ENCODE measurements at regions of chr1 and their contacts with region 1.

Region 1: GRCh38 chr1:113978863-113979702 is at the start of gene OLFML3:
- DNase-seq: peak; percentile 73 to 91 (median 76)
- ATAC-seq: peak; percentile 90
- H3K4me3 ChIP-seq: no peak within 1 kb of the TSS
- H3K27ac ChIP-seq: no peak within 1 kb of the TSS
- H3K4me1 ChIP-seq: peaks cover 5 to 8% of the 10 kb centered on the region in 2 experiments; a peak in 2 of 5 replicates
- H3K27me3 ChIP-seq: peaks cover 19 to 42% of the 10 kb centered on the region in 2 experiments; a peak in 4 of 5 replicates
- CTCF ChIP-seq: peak; percentile 78 to 89 (median 79)
- EP300 ChIP-seq: no peak
- POLR2A ChIP-seq: no peak
- RAD21 ChIP-seq: peak; percentile 84 to 92
- polyA plus RNA-seq, gene OLFML3: not detected

Region 2: GRCh38 chr1:113684153-113684541 is 294.9 kb before region 1 on chr1:
- CTCF ChIA-PET with region 1: no interaction called
- POLR2A ChIA-PET with region 1: no interaction called
- in situ Hi-C with region 1: no loop called
- intact Hi-C with region 1: loop called (anchors 10 kb)
- DNase-seq: peak in 2 of 4 experiments; percentile 34 to 53
- ATAC-seq: peak; percentile 88
- H3K4me3 ChIP-seq: no peak overlapping the region
- H3K27ac ChIP-seq: no peak overlapping the region
- H3K4me1 ChIP-seq: peaks cover 0 to 4% of the 10 kb centered on the region in 2 experiments; a peak in 2 of 5 replicates
- H3K27me3 ChIP-seq: no peaks in the 10 kb centered on the region
- CTCF ChIP-seq: no peak
- EP300 ChIP-seq: no peak
- POLR2A ChIP-seq: no peak
- RAD21 ChIP-seq: no peak

Region 3: DNA sequence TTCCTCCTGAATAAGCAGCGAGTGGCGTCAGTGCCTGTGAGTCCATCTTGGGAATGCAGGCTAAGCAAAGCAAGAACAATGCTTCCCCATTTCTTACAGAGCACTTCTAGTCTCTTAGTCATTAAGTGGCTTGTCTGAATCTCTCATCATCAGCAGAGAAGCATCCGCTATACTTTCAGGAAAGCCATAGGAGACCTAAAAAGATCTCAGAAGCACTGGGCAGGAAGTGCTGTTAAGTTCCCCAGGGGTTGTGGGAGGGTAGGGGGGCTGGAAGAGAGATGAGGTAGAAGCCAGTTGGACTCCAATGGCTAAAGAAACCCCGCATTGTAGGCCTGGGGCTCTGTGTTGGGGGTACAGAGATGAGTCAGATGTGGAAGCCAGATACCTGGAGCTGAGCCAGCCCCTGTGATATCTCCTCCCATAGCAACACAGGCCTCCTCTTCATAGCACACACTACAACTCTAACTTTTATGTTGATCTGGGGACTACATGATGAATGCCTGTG is 129.7 kb after region 1 on chr1:
- CTCF ChIA-PET with region 1: no interaction called
- POLR2A ChIA-PET with region 1: no interaction called
- in situ Hi-C with region 1: no loop called
- intact Hi-C with region 1: loop called (anchors 10 kb)
- DNase-seq: no peak
- ATAC-seq: no peak
- H3K4me3 ChIP-seq: no peak overlapping the region
- H3K27ac ChIP-seq: no peak overlapping the region
- H3K4me1 ChIP-seq: peaks cover 0 to 3% of the 10 kb centered on the region in 2 experiments; a peak in 1 of 5 replicates
- H3K27me3 ChIP-seq: peaks cover 28 to 71% of the 10 kb centered on the region in 2 experiments
- CTCF ChIP-seq: no peak
- EP300 ChIP-seq: no peak
- POLR2A ChIP-seq: no peak
- RAD21 ChIP-seq: no peak

Region 4: GRCh38 chr1:114274621-114275317 is 295.7 kb after region 1 on chr1:
- CTCF ChIA-PET with region 1: no interaction called
- POLR2A ChIA-PET with region 1: interaction called, 3 read pairs
- in situ Hi-C with region 1: loop called (anchors 10 kb)
- intact Hi-C with region 1: no loop called
- DNase-seq: no peak
- ATAC-seq: no peak
- H3K4me3 ChIP-seq: no peak overlapping the region
- H3K27ac ChIP-seq: no peak overlapping the region
- H3K4me1 ChIP-seq: no peaks in the 10 kb centered on the region
- H3K27me3 ChIP-seq: peaks cover 4 to 19% of the 10 kb centered on the region in 2 experiments; a peak in 3 of 5 replicates
- CTCF ChIP-seq: no peak
- EP300 ChIP-seq: no peak
- POLR2A ChIP-seq: no peak
- RAD21 ChIP-seq: no peak

Region 5: GRCh38 chr1:115052454-115053083 is 1073.5 kb after region 1 on chr1:
- CTCF ChIA-PET with region 1: interaction called, 7 read pairs
- POLR2A ChIA-PET with region 1: no interaction called
- in situ Hi-C with region 1: loop called (anchors 25 kb)
- intact Hi-C with region 1: loop called (anchors 2 kb)
- DNase-seq: peak; percentile 68 to 70 (median 70)
- ATAC-seq: peak; percentile 97
- H3K4me3 ChIP-seq: no peak overlapping the region
- H3K27ac ChIP-seq: no peak overlapping the region
- H3K4me1 ChIP-seq: no peaks in the 10 kb centered on the region
- H3K27me3 ChIP-seq: peaks cover 6 to 7% of the 10 kb centered on the region in 2 experiments; a peak in 3 of 5 replicates
- CTCF ChIP-seq: peak; percentile 74 to 86 (median 84)
- EP300 ChIP-seq: no peak
- POLR2A ChIP-seq: no peak
- RAD21 ChIP-seq: peak; percentile 67 to 79